HepG2 (cell line): ENCODE measurements at regions of chr11 and their contacts with region 1.

Region 1: DNA sequence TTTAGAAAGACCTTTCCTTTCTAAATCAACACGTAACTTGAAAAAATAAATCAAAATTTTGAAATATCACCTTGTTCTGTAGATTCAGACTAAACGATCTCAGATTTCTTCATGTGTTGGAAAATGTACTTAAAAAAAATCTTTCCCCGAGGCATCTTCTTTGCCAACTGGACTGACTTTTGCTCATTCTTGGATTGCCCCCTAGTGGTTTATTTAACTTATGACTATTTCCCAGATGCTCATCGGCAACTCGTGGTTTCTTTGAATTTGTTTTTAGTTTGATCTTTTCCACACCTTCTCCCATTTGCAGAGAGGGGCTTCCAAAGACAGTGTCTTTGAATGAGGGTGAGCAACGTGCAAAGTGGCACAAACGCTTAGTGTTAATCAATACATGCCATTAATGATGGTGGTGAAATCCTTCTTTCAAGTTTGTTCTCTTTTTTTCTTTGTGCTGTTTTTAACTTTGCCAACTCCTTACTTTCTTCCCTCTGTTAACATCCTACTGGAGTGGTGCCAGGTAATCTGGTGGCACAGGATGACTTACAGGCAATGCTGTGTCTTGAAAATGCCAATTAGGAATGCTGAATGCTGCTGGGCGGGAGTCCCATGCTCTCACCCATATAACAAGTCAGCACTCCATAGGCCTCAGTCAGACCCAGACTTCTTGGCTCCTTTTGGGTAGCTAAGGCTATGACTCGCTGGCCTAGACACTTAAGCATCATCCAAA is 18.3 kb downstream of the PRSS23 start:
- DNase-seq: peak; percentile 42
- ATAC-seq: peak; percentile 50; the same call in 1 of the 3 replicates
- H3K4me3 ChIP-seq: no peak overlapping the region
- H3K27ac ChIP-seq: no peak overlapping the region
- H3K4me1 ChIP-seq: no peaks in the 10 kb centered on the region
- H3K27me3 ChIP-seq: peaks cover 0 to 7% of the 10 kb centered on the region in 2 experiments; a peak in 2 of 5 replicates
- CTCF ChIP-seq: peak; percentile 72
- EP300 ChIP-seq: no peak
- POLR2A ChIP-seq: no peak
- RAD21 ChIP-seq: peak; percentile 30; the same call in 1 of the 2 replicates

Region 2: DNA sequence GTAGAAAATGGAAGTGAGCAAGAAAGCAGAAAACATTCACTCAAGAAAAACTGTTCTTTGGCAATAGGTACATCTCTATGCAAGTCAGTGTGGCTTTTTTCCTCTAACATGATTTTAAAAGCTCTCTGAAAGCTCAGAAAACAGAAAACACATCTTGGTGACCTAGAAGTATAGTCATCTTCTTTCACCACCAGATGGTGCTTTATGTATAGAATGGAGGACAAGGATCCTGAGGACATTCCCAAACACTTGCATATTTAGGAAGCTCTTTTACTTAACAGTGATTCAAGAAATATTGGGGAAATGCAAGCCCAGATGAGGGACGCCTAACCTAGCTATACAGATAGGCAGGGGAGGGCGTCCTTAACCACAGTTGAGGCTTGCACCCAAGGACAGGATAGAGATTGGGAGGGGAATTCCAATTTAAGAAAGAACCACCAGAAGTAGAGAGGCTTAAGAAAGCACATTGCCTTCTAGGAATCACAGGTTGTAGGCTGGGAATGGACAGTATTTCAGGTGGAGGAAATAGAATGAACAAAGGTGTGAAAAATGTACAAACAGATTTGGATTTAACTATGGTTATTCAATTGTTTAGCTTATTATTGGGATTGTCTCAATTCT is 457.7 kb before region 1 on chr11:
- CTCF ChIA-PET with region 1: no interaction called
- POLR2A ChIA-PET with region 1: no interaction called
- in situ Hi-C with region 1: loop called (anchors 25 kb)
- intact Hi-C with region 1: loop called (anchors 1 kb)
- DNase-seq: peak; percentile 6
- ATAC-seq: peak; percentile 56
- H3K4me3 ChIP-seq: no peak overlapping the region
- H3K27ac ChIP-seq: no peak overlapping the region
- H3K4me1 ChIP-seq: no peaks in the 10 kb centered on the region
- H3K27me3 ChIP-seq: no peaks in the 10 kb centered on the region
- CTCF ChIP-seq: no peak; the same call in 1 of the 2 replicates
- EP300 ChIP-seq: no peak
- POLR2A ChIP-seq: no peak
- RAD21 ChIP-seq: no peak

Region 3: GRCh38 chr11:86456052-86456939 is 362.3 kb before region 1 on chr11:
- CTCF ChIA-PET with region 1: interaction called, 34 read pairs
- POLR2A ChIA-PET with region 1: no interaction called
- in situ Hi-C with region 1: loop called (anchors 5 kb)
- intact Hi-C with region 1: loop called (anchors 1 kb)
- DNase-seq: peak; percentile 66
- ATAC-seq: peak; percentile 96
- H3K4me3 ChIP-seq: no peak overlapping the region
- H3K27ac ChIP-seq: no peak overlapping the region
- H3K4me1 ChIP-seq: no peaks in the 10 kb centered on the region
- H3K27me3 ChIP-seq: no peaks in the 10 kb centered on the region
- CTCF ChIP-seq: peak; percentile 92
- EP300 ChIP-seq: no peak
- POLR2A ChIP-seq: no peak
- RAD21 ChIP-seq: peak; percentile 86

Region 4: GRCh38 chr11:86537541-86538222 is 280.9 kb before region 1 on chr11:
- CTCF ChIA-PET with region 1: interaction called, 3 read pairs
- POLR2A ChIA-PET with region 1: no interaction called
- in situ Hi-C with region 1: no loop called
- intact Hi-C with region 1: loop called (anchors 1 kb)
- DNase-seq: no peak
- ATAC-seq: peak; percentile 56; the same call in 2 of the 3 replicates
- H3K4me3 ChIP-seq: no peak overlapping the region
- H3K27ac ChIP-seq: no peak overlapping the region
- H3K4me1 ChIP-seq: no peaks in the 10 kb centered on the region
- H3K27me3 ChIP-seq: no peaks in the 10 kb centered on the region
- CTCF ChIP-seq: peak; percentile 27; the same call in 1 of the 2 replicates
- EP300 ChIP-seq: no peak
- POLR2A ChIP-seq: no peak
- RAD21 ChIP-seq: no peak

Region 5: GRCh38 chr11:86608251-86608799 is 210.3 kb before region 1 on chr11:
- CTCF ChIA-PET with region 1: interaction called, 12 read pairs
- POLR2A ChIA-PET with region 1: no interaction called
- in situ Hi-C with region 1: no loop called
- intact Hi-C with region 1: loop called (anchors 1 kb)
- DNase-seq: peak; percentile 60
- ATAC-seq: peak; percentile 93
- H3K4me3 ChIP-seq: no peak overlapping the region
- H3K27ac ChIP-seq: no peak overlapping the region
- H3K4me1 ChIP-seq: 0 out of 2 replicates have a peak, but pooled peaks cover 4% of the 10 kb centered on the region
- H3K27me3 ChIP-seq: no peaks in the 10 kb centered on the region
- CTCF ChIP-seq: peak; percentile 78
- EP300 ChIP-seq: no peak
- POLR2A ChIP-seq: no peak
- RAD21 ChIP-seq: peak; percentile 56

Region 6: DNA sequence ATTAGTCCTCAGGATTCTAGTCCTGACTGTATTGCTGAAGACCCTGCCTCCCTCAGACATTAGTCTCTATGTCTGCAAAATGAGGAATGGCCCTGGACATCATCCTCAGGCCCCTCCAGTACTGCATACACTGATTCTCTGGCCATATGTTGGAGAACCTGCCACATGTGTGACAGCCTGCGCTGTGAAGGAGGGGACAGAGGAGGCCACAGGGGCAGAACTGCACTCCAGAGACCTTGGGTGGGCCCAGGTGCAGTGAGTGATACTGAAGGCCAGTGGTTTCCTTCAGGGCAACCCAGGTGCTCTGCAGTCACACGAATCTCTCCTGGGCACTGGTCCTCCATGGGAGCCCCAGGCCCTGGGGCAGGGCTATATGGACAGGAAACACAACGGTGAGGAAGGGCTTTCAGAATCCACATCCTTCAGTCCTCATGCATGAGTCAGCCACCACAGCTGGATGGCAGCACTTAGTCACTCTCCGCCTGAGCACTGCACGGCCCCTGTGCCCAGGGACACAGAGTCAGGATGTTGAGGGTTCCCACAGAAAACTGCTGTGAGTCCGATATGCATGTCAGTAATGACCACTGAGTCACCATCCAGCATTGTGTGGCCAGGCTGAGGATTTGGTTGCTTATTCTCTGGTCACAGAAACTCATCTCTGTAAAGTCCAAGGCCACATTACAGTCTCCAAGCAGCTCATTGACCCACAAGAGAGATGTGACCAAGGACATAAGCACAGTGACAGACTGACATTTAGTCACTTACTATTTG is 185.9 kb before region 1 on chr11:
- CTCF ChIA-PET with region 1: no interaction called
- POLR2A ChIA-PET with region 1: no interaction called
- in situ Hi-C with region 1: no loop called
- intact Hi-C with region 1: loop called (anchors 1 kb)
- DNase-seq: peak; percentile 28
- ATAC-seq: peak; percentile 92
- H3K4me3 ChIP-seq: no peak overlapping the region
- H3K27ac ChIP-seq: no peak overlapping the region
- H3K4me1 ChIP-seq: no peaks in the 10 kb centered on the region
- H3K27me3 ChIP-seq: peaks cover 0 to 24% of the 10 kb centered on the region in 2 experiments; a peak in 1 of 5 replicates
- CTCF ChIP-seq: peak; percentile 48
- EP300 ChIP-seq: no peak
- POLR2A ChIP-seq: no peak
- RAD21 ChIP-seq: no peak

Region 7: GRCh38 chr11:86669424-86669823 is 149.2 kb before region 1 on chr11:
- CTCF ChIA-PET with region 1: no interaction called
- POLR2A ChIA-PET with region 1: no interaction called
- in situ Hi-C with region 1: no loop called
- intact Hi-C with region 1: loop called (anchors 1 kb)
- DNase-seq: no peak
- ATAC-seq: no peak
- H3K4me3 ChIP-seq: no peak overlapping the region
- H3K27ac ChIP-seq: no peak overlapping the region
- H3K4me1 ChIP-seq: peaks cover 13% of the 10 kb centered on the region; the same call in 1 of the 2 replicates
- H3K27me3 ChIP-seq: peaks cover 4 to 65% of the 10 kb centered on the region in 2 experiments
- CTCF ChIP-seq: no peak
- EP300 ChIP-seq: no peak
- POLR2A ChIP-seq: no peak
- RAD21 ChIP-seq: no peak